Endothelial cell of umbilical vein (primary cell): ENCODE measurements at regions of chr16 and their contacts with region 1.

Region 1: DNA sequence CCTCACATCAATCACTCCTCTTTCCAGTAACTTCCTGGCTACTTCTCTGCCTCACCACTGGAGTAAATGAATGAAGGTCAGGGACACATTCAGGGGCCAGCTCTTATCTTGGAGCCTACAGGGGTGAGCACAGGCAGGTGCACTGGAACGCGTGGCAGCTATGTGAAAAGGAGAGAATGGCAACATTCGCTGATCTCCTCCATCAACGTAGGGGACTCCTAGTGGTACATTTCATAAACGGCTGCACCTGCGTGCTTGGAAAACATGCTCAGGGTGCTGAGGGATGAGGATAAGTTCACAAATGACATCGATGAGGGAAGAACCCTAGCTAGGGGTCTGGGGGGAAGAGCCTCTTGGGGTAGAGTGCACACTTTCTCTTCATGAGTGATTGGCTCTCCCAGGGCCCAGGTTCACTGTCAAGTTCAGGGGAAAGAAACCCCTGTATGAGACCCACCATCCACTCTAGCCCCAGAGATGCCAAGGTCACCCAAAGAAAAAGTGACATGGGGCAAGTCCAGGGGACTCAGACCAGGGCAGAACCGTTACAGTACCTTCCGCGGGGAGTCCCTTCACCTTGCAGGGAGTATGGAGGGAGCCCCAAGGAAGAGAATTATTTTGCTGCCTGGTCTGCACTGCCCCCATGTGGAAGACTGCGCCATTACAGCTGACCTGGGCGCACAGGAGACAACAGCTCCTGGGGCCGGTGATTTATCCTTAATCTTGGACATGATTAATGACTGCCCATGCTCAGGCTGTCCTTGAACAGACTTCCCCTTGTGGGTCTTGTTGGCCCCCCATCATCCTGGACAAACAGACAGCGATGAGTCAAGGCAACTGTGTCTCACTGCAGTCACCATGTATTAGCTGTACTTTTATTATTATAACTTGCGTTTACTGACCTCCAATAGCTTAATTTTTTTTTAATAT is 30.1 kb downstream of the VAC14 start:
- DNase-seq: peak; percentile 71
- H3K4me3 ChIP-seq: no peak overlapping the region
- H3K27ac ChIP-seq: no peak overlapping the region
- H3K4me1 ChIP-seq: no peaks in the 10 kb centered on the region
- H3K27me3 ChIP-seq: no peaks in the 10 kb centered on the region
- CTCF ChIP-seq: peak; percentile 88 to 89
- POLR2A ChIP-seq: no peak

Region 2: GRCh38 chr16:70576431-70577255 is 194.2 kb before region 1 on chr16:
- CTCF ChIA-PET with region 1: interaction called, 4 read pairs
- POLR2A ChIA-PET with region 1: no interaction called
- dilution Hi-C with region 1: no loop called
- intact Hi-C with region 1: loop called (anchors 10 kb)
- DNase-seq: peak; percentile 85
- H3K4me3 ChIP-seq: no peak overlapping the region
- H3K27ac ChIP-seq: peak overlapping the region; percentile 41
- H3K4me1 ChIP-seq: peaks cover 55% of the 10 kb centered on the region
- H3K27me3 ChIP-seq: no peaks in the 10 kb centered on the region
- CTCF ChIP-seq: no peak
- POLR2A ChIP-seq: peak; percentile 47

Region 3: GRCh38 chr16:70679666-70680494 is 91.0 kb before region 1 on chr16:
- CTCF ChIA-PET with region 1: interaction called, 144 read pairs
- POLR2A ChIA-PET with region 1: interaction called, 4 read pairs
- dilution Hi-C with region 1: no loop called
- intact Hi-C with region 1: loop called (anchors 1 kb)
- DNase-seq: no peak
- H3K4me3 ChIP-seq: no peak overlapping the region
- H3K27ac ChIP-seq: no peak overlapping the region
- H3K4me1 ChIP-seq: peaks cover 5% of the 10 kb centered on the region
- H3K27me3 ChIP-seq: no peaks in the 10 kb centered on the region
- CTCF ChIP-seq: peak; percentile 49 to 56
- POLR2A ChIP-seq: no peak

Region 4: GRCh38 chr16:70737377-70738082 is 33.4 kb before region 1 on chr16:
- CTCF ChIA-PET with region 1: interaction called, 28 read pairs
- POLR2A ChIA-PET with region 1: no interaction called
- dilution Hi-C with region 1: no loop called
- intact Hi-C with region 1: loop called (anchors 1 kb)
- DNase-seq: no peak
- H3K4me3 ChIP-seq: no peak overlapping the region
- H3K27ac ChIP-seq: no peak overlapping the region
- H3K4me1 ChIP-seq: peaks cover 3% of the 10 kb centered on the region
- H3K27me3 ChIP-seq: no peaks in the 10 kb centered on the region
- CTCF ChIP-seq: no peak
- POLR2A ChIP-seq: no peak

Region 5: GRCh38 chr16:70784692-70785555 is 14.0 kb after region 1 on chr16:
- CTCF ChIA-PET with region 1: interaction called, 10 read pairs
- POLR2A ChIA-PET with region 1: no interaction called
- dilution Hi-C with region 1: no loop called
- intact Hi-C with region 1: no loop called
- DNase-seq: no peak
- H3K4me3 ChIP-seq: no peak overlapping the region
- H3K27ac ChIP-seq: no peak overlapping the region
- H3K4me1 ChIP-seq: no peaks in the 10 kb centered on the region
- H3K27me3 ChIP-seq: no peaks in the 10 kb centered on the region
- CTCF ChIP-seq: no peak
- POLR2A ChIP-seq: no peak

Region 6: GRCh38 chr16:71185347-71185746 is 414.5 kb after region 1 on chr16:
- CTCF ChIA-PET with region 1: no interaction called
- POLR2A ChIA-PET with region 1: no interaction called
- dilution Hi-C with region 1: no loop called
- intact Hi-C with region 1: no loop called
- DNase-seq: no peak
- H3K4me3 ChIP-seq: no peak overlapping the region
- H3K27ac ChIP-seq: no peak overlapping the region
- H3K4me1 ChIP-seq: no peaks in the 10 kb centered on the region
- H3K27me3 ChIP-seq: no peaks in the 10 kb centered on the region
- CTCF ChIP-seq: no peak
- POLR2A ChIP-seq: no peak